Endothelial cell of umbilical vein (primary cell): ENCODE measurements at regions of chr22 and their contacts with region 1.

Region 1: GRCh38 chr22:31313366-31314147 is 21.3 kb upstream of the PIK3IP1 start:
- DNase-seq: peak; percentile 88
- H3K4me3 ChIP-seq: no peak overlapping the region
- H3K27ac ChIP-seq: no peak overlapping the region
- H3K4me1 ChIP-seq: peaks cover 2% of the 10 kb centered on the region
- H3K27me3 ChIP-seq: no peaks in the 10 kb centered on the region
- CTCF ChIP-seq: peak; percentile 84 to 86
- POLR2A ChIP-seq: no peak

Region 2: GRCh38 chr22:31211862-31212730 is 101.5 kb before region 1 on chr22 and contains the start of gene LIMK2:
- CTCF ChIA-PET with region 1: interaction called, 12 read pairs
- POLR2A ChIA-PET with region 1: no interaction called
- dilution Hi-C with region 1: no loop called
- intact Hi-C with region 1: no loop called
- DNase-seq: peak; percentile 88
- H3K4me3 ChIP-seq: peak within 1 kb of the TSS; percentile 86 to 97 (median 92)
- H3K27ac ChIP-seq: peak within 1 kb of the TSS; percentile 93
- H3K4me1 ChIP-seq: peaks cover 60% of the 10 kb centered on the region
- H3K27me3 ChIP-seq: no peaks in the 10 kb centered on the region
- CTCF ChIP-seq: peak; percentile 76 to 85
- POLR2A ChIP-seq: peak; percentile 88
- total RNA-seq, gene LIMK2: 71.7 and 76.7 TPM in 2 replicates

Region 3: DNA sequence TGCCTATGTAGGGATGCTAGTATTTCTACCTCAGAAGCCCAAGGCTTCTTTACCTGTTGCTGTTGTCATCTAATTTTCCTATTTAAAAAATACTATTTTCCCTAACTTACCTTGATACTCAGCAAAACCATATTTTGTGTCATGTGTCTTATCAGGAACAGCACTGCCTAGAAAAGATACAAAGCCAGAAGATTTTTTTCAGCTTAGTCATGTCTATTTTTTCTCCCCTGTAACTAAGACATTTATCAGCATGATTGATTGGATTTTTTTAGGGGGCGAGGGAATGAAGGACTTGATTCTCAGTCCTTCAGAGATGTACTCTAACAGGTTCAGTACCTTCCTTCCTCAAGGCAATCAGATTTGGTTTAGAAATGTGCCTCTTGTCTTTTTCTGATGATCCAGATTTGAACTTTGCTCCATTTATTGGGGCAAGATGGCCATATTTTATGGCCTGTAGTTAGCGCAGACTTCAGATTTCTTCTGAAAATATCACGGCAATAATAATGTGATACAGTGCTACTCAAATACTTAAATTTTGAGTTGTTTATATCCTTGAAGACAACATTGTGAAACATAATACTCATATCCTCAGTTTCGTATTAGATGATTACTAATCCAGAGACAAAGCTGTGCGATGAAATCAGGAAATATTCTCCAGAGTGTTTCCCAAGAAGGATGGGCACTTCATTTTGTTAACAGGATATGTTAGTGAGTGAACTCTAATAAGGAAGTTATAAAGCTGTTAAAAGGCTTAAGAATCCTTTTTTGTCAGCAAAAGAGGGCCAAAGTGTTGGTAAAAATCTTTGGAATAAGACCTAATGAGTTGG is 17.5 kb before region 1 on chr22:
- CTCF ChIA-PET with region 1: interaction called, 79 read pairs
- POLR2A ChIA-PET with region 1: interaction called, 6 read pairs
- dilution Hi-C with region 1: no loop called
- intact Hi-C with region 1: loop called (anchors 1 kb)
- DNase-seq: peak; percentile 70
- H3K4me3 ChIP-seq: no peak overlapping the region
- H3K27ac ChIP-seq: peak overlapping the region; percentile 50
- H3K4me1 ChIP-seq: peaks cover 30% of the 10 kb centered on the region
- H3K27me3 ChIP-seq: peaks cover 6 to 7% of the 10 kb centered on the region in 2 experiments
- CTCF ChIP-seq: no peak
- POLR2A ChIP-seq: no peak

Region 4: DNA sequence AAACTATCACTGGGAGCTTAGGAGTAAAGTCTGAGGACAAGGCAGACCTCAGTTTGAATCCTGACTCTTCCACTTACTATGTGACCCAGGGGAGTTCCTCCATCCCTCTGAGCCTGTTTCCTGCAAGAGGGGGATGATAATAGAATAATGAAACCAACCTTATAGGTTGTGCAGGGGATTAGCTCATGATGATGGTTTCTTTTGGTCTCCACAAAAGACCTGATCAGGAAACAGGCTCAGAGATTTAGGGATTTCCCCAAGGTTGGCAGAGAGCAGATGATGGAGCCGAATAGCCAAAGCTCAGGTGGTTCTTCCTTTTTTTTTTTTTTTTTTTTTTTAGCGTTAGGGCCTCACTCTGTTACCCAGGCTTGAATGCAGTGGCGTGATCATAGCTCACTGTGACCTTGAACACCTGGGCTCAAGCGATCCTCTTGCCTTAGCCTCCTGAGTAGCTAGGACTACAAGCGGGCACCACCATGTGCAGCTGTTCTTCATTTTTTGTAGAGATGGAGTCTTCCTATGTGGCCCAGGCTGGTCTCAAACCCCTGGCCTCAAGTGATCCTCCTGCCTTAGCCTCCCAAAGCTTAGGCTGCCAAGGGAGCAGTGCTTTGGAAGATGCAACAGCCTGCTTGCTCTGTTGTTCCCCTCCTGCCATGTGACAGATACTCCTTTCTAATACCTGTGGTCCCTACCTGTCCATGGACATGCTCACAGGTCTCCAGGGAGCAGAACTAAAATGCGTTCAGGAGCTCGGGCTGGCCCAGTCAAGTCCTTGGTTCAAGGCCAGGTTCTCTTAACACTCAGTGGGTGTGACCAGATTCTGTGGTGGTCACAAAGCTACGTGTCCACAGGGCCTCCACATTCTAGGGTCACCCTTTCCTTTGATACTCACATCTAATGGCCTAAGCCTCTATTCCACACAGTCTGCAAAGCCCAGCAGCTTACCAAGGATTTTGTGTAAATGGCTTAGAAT is 10.3 kb after region 1 on chr22:
- CTCF ChIA-PET with region 1: interaction called, 20 read pairs
- POLR2A ChIA-PET with region 1: no interaction called
- dilution Hi-C with region 1: no loop called
- intact Hi-C with region 1: no loop called
- DNase-seq: no peak
- H3K4me3 ChIP-seq: no peak overlapping the region
- H3K27ac ChIP-seq: no peak overlapping the region
- H3K4me1 ChIP-seq: no peaks in the 10 kb centered on the region
- H3K27me3 ChIP-seq: no peaks in the 10 kb centered on the region
- CTCF ChIP-seq: no peak
- POLR2A ChIP-seq: no peak